Thyroid gland (tissue), 4 donors: ENCODE measurements at regions of chr2 and their contacts with region 1.

Region 1: GRCh38 chr2:8574144-8575037 is 107.5 kb upstream of the ID2 start:
- DNase-seq: peak in 1 of 2 donors; percentile 27
- H3K4me3 ChIP-seq: no peak overlapping the region
- H3K27ac ChIP-seq: no peak overlapping the region
- H3K4me1 ChIP-seq: peaks cover 10 to 16% of the 10 kb centered on the region in 2 donors
- H3K27me3 ChIP-seq: no peaks in the 10 kb centered on the region
- CTCF ChIP-seq: no peak
- POLR2A ChIP-seq: no peak

Region 2: DNA sequence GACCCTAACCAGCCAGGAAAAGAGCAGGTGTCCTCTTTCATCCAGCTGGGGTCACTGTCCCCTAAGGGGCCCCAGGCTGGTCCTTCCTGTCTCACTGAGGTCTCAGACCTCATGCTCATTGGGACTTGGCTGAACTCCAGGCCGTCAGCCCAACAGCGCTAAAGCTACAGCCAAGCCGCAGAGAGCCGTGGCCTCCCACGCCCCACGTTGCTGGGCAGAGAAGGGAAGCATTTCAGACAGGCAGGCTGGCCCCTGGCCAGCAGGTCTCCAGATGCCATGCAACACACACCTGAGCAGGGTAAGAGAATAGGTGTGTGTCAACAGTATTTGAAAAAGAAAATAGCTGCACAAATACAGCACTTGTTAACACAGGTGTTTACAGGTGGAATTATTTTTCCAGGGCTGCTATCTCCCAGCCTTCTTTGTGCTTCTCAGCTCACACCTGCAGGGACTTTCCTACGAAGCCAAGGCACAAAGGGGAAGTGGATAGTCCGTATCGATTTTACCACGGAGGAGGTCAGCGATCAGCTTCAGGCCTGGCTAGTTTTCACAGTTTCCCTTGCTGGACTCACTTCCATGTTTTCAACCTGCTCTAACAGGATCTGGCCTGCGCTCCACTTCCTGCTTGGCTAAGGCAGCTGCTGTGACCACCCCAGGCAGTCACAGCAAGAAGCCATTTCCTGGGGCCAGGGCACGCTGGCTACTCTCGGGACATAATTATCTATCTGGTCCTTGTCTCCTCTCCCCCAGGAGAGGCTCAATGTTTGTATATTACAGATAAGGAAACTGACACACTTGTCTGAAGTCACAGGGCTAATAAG is 48.6 kb before region 1 on chr2:
- intact Hi-C with region 1: loop called (anchors 10 kb)
- DNase-seq: peak; percentile 99 to 100
- H3K4me3 ChIP-seq: no peak overlapping the region
- H3K27ac ChIP-seq: peak overlapping the region; percentile 29 to 76 (median 62)
- H3K4me1 ChIP-seq: peaks cover 11 to 15% of the 10 kb centered on the region in 2 donors
- H3K27me3 ChIP-seq: no peaks in the 10 kb centered on the region
- CTCF ChIP-seq: peak in 4 of 6 experiments; percentile 43 to 75 (median 56)
- POLR2A ChIP-seq: no peak

Region 3: GRCh38 chr2:8656160-8656641 is 81.8 kb after region 1 on chr2:
- intact Hi-C with region 1: no loop called
- DNase-seq: peak; percentile 42 to 44
- H3K4me3 ChIP-seq: no peak overlapping the region
- H3K27ac ChIP-seq: peak overlapping the region; percentile 55 to 71 (median 63)
- H3K4me1 ChIP-seq: peaks cover 17 to 23% of the 10 kb centered on the region in 2 donors
- H3K27me3 ChIP-seq: no peaks in the 10 kb centered on the region
- CTCF ChIP-seq: no peak
- POLR2A ChIP-seq: peak in 1 of 2 donors; percentile 32